Dendritic cell treated with granulocyte-macrophage colony-stimulating factor and Interleukin-4, amounts not matched to agents 40 ng/mL and 50 ng/mL, for 4 days (primary cell): ENCODE measurements at regions of chr14 and their contacts with region 1.

Region 1: GRCh38 chr14:35229495-35230089 is 62.6 kb upstream of the PSMA6 start:
- H3K4me3 Mint-ChIP-seq: no peak overlapping the region
- H3K27ac Mint-ChIP-seq: no peak overlapping the region
- H3K4me1 Mint-ChIP-seq: peaks cover 46% of the 10 kb centered on the region
- H3K27me3 Mint-ChIP-seq: no peaks in the 10 kb centered on the region

Region 2: GRCh38 chr14:34180460-34180868 is 1049.1 kb before region 1 on chr14:
- intact Hi-C with region 1: no loop called
- H3K4me3 Mint-ChIP-seq: no peak overlapping the region
- H3K27ac Mint-ChIP-seq: no peak overlapping the region
- H3K4me1 Mint-ChIP-seq: peaks cover 24% of the 10 kb centered on the region
- H3K27me3 Mint-ChIP-seq: peaks cover 13% of the 10 kb centered on the region

Region 3: DNA sequence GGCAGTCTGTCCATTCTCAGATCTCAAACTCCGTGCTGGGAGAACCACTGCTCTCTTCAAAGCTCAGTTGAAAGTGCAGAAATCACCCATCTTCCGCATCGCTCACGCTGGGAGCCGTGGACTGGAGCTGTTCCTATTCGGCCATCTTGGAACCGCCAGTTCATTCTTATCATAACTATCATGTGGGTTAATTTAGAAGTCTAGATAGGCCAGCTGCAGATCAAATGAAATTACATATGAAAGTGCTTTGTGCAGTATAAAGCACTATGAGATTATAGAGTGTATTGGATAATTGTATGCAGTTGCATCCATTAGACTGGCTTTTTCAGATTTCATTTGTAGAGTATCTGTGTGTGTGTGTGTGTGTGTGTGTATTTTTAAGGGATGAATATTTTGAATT is 49.4 kb before region 1 on chr14:
- intact Hi-C with region 1: no loop called
- H3K4me3 Mint-ChIP-seq: no peak overlapping the region
- H3K27ac Mint-ChIP-seq: no peak overlapping the region
- H3K4me1 Mint-ChIP-seq: no peaks in the 10 kb centered on the region
- H3K27me3 Mint-ChIP-seq: no peaks in the 10 kb centered on the region

Region 4: DNA sequence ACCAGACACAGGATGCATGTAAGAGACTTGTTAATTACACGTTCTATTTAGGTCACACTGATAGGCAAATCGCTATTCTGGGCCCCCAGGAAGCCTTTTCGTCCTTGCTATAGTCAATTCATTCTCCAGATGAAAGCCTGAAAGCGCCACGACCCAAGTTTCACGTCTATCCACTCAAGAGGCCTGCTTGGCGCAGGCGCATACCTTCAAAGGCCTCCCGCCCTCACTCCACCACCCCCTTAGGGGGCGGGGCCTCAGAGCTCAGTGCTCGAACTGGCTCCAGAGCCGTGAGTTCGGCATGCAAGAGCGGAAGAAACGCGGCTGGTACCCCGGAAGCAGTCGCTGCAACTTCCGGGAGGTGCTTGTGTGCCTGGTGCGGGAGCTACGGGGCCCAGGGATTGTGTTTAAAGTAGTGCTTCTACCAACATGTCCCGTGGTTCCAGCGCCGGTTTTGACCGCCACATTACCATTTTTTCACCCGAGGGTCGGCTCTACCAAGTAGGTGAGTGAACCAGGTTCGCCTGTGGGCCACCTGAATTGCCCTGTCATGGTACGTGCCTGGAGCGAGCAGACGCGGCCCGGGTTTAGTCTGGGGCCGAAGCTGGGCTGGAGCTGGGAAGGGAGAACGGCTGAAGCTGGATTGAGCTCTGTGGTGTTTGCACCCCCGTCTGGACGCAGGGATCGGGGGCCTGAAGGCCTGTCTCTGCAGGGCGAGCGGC is 62.6 kb after region 1 on chr14 and contains the start of gene PSMA6:
- intact Hi-C with region 1: loop called (anchors 5 kb)
- H3K4me3 Mint-ChIP-seq: peak within 1 kb of the TSS; percentile 98
- H3K27ac Mint-ChIP-seq: peak within 1 kb of the TSS; percentile 92
- H3K4me1 Mint-ChIP-seq: peaks cover 51% of the 10 kb centered on the region
- H3K27me3 Mint-ChIP-seq: no peaks in the 10 kb centered on the region